ENCODE measurements at regions of chr5 and their contacts with region 1.

Region 1: DNA sequence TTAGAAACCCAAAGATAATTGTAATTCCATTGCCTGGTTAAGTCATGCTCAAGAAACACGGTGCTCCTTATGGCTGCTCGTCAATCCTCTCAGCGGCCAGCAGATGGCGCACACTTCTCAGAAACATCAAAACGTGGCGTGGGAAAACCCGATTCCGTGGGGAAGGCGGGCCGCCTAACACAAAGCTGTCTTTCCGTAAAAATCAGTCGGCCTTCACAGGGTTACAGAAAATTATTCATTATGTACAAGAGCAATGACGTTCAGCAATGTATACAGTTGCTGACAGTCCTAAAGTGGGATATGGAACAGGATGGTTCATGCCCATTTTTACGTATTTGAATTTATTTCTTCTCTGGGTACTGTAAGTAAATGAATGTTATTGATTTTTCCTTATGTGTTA is 83.5 kb downstream of the PDE4D start:
- DNase-seq: peak; percentile 17 to 53 (median 35)
- H3K4me3 ChIP-seq: no peak overlapping the region
- H3K4me3 Mint-ChIP-seq: no peak overlapping the region
- H3K27ac ChIP-seq: no peak overlapping the region
- H3K27ac Mint-ChIP-seq: no peak overlapping the region
- H3K4me1 ChIP-seq: peaks cover 4% of the 10 kb centered on the region
- H3K4me1 Mint-ChIP-seq: peaks cover 0 to 6% (median 6%) of the 10 kb centered on the region in 3 donors
- H3K27me3 ChIP-seq: no peaks in the 10 kb centered on the region
- H3K27me3 Mint-ChIP-seq: peaks cover 1 to 17% of the 10 kb centered on the region in 2 donors

Region 2: DNA sequence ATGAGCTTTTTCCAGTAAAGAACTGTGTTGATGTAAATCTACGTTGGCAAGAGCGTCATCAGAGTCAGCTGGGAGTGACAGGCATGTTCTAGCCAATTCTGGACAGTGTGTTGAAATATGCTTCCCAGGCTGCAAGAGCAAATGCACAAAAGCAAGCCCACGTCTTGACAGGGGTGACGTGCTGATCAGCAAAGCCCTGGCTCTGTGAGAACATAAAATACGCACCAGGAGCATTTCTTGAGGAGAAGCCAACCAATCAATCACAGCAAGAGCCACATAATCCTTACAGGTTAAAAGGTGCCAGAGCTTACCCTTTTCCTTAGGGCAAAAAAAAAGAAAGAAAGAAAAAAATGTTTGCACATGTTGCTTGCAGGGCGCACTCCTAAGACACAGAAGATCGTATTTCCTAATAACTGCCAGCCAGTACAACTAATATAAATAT is 64.6 kb before region 1 on chr5:
- CTCF ChIA-PET with region 1: no interaction called
- POLR2A ChIA-PET with region 1: no interaction called
- DNase-seq: no peak
- H3K4me3 ChIP-seq: no peak overlapping the region
- H3K4me3 Mint-ChIP-seq: no peak overlapping the region
- H3K27ac ChIP-seq: no peak overlapping the region
- H3K27ac Mint-ChIP-seq: no peak overlapping the region
- H3K4me1 ChIP-seq: no peaks in the 10 kb centered on the region
- H3K4me1 Mint-ChIP-seq: no peaks in the 10 kb centered on the region
- H3K27me3 ChIP-seq: no peaks in the 10 kb centered on the region
- H3K27me3 Mint-ChIP-seq: peaks cover 0 to 1% of the 10 kb centered on the region in 2 donors

Region 3: DNA sequence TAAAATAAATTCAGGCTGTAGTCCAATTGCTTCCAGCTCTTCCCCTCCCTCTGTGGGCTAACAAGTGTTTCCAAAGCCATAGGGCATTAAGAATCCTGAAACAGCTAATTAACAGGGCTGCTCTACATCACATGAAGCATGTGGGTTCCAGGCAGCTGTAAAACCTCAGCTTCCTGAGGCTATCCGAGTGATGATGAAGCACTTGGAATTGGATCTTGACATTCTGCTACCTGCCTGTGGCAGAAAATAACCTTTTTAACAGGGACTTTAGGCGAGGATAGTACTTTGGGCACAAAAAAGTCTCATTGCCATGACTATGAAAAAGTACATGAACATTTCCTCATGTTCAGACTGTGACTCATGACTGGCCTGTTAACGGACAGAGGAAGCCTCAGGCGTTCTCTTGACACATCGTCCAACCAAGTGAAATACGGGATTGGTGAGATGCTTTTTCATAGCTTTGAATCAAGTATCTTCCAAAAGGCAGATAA is 23.7 kb before region 1 on chr5:
- CTCF ChIA-PET with region 1: no interaction called
- POLR2A ChIA-PET with region 1: no interaction called
- DNase-seq: no peak
- H3K4me3 ChIP-seq: no peak overlapping the region
- H3K4me3 Mint-ChIP-seq: no peak overlapping the region
- H3K27ac ChIP-seq: no peak overlapping the region
- H3K27ac Mint-ChIP-seq: no peak overlapping the region
- H3K4me1 ChIP-seq: no peaks in the 10 kb centered on the region
- H3K4me1 Mint-ChIP-seq: peaks cover 2 to 6% (median 3%) of the 10 kb centered on the region in 3 donors
- H3K27me3 ChIP-seq: no peaks in the 10 kb centered on the region
- H3K27me3 Mint-ChIP-seq: peaks cover 9 to 11% of the 10 kb centered on the region in 2 donors

Region 4: GRCh38 chr5:59799668-59800346 is 10.2 kb before region 1 on chr5:
- CTCF ChIA-PET with region 1: interaction called, 20 read pairs
- POLR2A ChIA-PET with region 1: no interaction called
- DNase-seq: peak in 2 of 5 donors; percentile 7 to 34
- H3K4me3 ChIP-seq: no peak overlapping the region
- H3K4me3 Mint-ChIP-seq: no peak overlapping the region
- H3K27ac ChIP-seq: no peak overlapping the region
- H3K27ac Mint-ChIP-seq: no peak overlapping the region
- H3K4me1 ChIP-seq: peaks cover 8% of the 10 kb centered on the region
- H3K4me1 Mint-ChIP-seq: no peaks in the 10 kb centered on the region
- H3K27me3 ChIP-seq: no peaks in the 10 kb centered on the region
- H3K27me3 Mint-ChIP-seq: peaks cover 0 to 14% of the 10 kb centered on the region in 2 donors

Region 5: DNA sequence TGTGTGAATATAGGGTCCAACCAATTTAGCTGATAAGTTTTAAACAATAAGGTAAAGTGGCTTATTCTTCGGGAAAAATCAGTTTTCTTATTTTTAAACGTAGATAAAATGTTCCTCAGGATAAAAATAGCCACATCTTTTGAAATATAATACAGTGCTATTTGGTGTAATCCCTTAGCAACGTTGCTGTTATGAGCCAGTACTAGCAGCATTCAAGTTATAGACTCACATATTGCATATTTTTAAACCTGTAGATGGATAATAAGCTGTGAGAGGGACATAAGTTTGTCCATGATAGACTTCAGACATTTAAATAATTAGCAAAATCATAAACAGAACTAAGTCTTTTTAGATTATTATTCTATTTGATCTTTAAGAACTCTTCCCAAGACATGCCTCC is 77.2 kb after region 1 on chr5:
- CTCF ChIA-PET with region 1: no interaction called
- POLR2A ChIA-PET with region 1: no interaction called
- DNase-seq: no peak
- H3K4me3 ChIP-seq: no peak overlapping the region
- H3K4me3 Mint-ChIP-seq: no peak overlapping the region
- H3K27ac ChIP-seq: no peak overlapping the region
- H3K27ac Mint-ChIP-seq: no peak overlapping the region
- H3K4me1 ChIP-seq: no peaks in the 10 kb centered on the region
- H3K4me1 Mint-ChIP-seq: no peaks in the 10 kb centered on the region
- H3K27me3 ChIP-seq: no peaks in the 10 kb centered on the region
- H3K27me3 Mint-ChIP-seq: peaks cover 2 to 9% of the 10 kb centered on the region in 2 donors

Measured in CD8-positive, alpha-beta memory T cell (primary cell).